ENCODE measurements at regions of chr13 and their contacts with region 1.

Region 1: DNA sequence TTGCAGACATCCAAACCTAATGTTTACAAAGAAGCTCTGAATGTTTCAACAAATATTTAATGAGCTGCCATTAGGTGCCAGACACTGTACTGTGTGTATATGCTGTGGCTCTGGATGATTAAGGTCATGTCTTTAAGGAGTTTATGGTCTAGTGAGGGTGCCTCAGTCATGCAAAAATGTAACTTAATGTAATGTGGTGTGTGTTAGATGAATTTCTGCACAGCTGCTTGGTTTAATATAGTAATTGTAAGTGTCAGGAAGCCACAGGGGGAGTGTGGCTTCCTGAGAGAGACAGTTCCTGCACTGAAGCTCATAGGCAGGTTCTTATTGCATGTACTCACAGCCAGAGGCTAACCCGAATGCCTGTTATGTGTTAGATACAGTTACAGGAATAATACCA is 43.3 kb downstream of the SPATA13 start:
- DNase-seq: no peak
- ATAC-seq: peak; percentile 99
- H3K4me3 Mint-ChIP-seq: peak overlapping the region; percentile 72
- H3K27ac Mint-ChIP-seq: peak overlapping the region; percentile 83
- H3K4me1 Mint-ChIP-seq: peaks cover 32% of the 10 kb centered on the region
- H3K27me3 Mint-ChIP-seq: no peaks in the 10 kb centered on the region

Region 2: DNA sequence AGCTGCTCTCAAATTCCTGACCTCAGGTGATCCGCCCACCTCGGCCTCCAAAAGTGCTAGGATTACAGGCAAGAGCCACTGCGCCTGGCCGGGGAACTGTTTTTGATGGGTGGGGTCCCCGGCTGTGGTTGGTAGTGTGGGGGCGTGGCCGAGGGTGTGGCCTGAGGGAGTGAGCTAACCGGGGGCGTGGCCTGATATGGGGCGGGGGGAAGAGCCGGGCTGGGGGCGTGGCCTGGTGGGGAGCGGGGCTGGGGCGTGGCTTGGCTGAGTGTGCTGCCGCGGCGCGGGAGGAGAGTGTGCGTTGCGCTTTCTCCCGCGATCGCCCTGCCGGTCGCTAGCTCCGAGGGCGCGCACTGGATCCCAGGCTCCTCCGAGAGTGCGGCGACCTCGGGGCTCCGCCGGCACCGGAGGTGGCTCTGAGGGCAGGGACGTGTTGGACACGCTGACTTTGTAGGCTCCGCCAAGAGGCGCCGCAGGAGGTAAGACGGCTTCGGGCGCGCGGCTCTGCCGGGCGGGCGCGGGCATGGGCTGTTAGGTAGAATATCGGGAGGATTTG is 43.3 kb before region 1 on chr13 and contains the start of gene SPATA13:
- POLR2A ChIA-PET with region 1: interaction called, 20 read pairs
- DNase-seq: peak; percentile 95
- ATAC-seq: peak; percentile 84
- H3K4me3 Mint-ChIP-seq: peak within 1 kb of the TSS; percentile 86
- H3K27ac Mint-ChIP-seq: peak within 1 kb of the TSS; percentile 75
- H3K4me1 Mint-ChIP-seq: peaks cover 30% of the 10 kb centered on the region
- H3K27me3 Mint-ChIP-seq: peaks cover 9% of the 10 kb centered on the region
- total RNA-seq, gene SPATA13: 78.7 to 89.9 TPM

Measured in activated naive CD8-positive, alpha-beta T cell treated with anti-CD3 and anti-CD28 coated beads, Interleukin-2, amount 10 ng/mL, durations not matched to agents 7 days and 5 days (primary cell).